ENCODE measurements at regions of chr10 and their contacts with region 1.

Region 1: GRCh38 chr10:97278491-97278989 is 13.9 kb downstream of the ARHGAP19 start:
- DNase-seq: peak; percentile 65
- H3K27ac ChIP-seq: no peak overlapping the region
- CTCF ChIP-seq: peak; percentile 76

Region 2: GRCh38 chr10:97292097-97292862 is 13.7 kb after region 1 on chr10 and contains the start of gene ARHGAP19:
- CTCF ChIA-PET with region 1: interaction called, 12 read pairs
- POLR2A ChIA-PET with region 1: interaction called, 3 read pairs
- DNase-seq: peak; percentile 100
- H3K27ac ChIP-seq: peak within 1 kb of the TSS; percentile 99
- CTCF ChIP-seq: peak; percentile 47; the same call in 1 of the 2 replicates

Region 3: DNA sequence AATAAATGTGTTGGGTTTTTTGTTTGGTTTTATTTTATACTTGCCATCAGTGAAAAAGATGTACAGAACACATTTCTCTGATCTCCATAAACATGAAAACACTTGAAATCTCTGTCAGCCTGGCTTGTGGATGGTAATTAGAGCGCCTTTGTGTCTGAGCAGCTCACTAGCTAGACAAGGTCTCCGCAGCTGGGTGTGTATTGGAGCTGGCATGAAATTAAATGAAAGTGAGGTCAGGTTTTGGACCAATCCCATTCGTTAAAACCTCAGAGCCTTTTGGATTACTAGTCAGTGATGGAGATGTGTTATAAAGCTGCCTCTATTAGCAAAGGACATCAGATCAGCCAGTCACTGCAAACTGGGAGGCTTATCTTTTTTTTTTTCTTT is 43.3 kb after region 1 on chr10:
- CTCF ChIA-PET with region 1: no interaction called
- POLR2A ChIA-PET with region 1: no interaction called
- DNase-seq: no peak
- H3K27ac ChIP-seq: no peak overlapping the region
- CTCF ChIP-seq: no peak

Region 4: GRCh38 chr10:97355571-97355975 is 77.0 kb after region 1 on chr10:
- CTCF ChIA-PET with region 1: interaction called, 11 read pairs
- POLR2A ChIA-PET with region 1: no interaction called
- DNase-seq: no peak
- H3K27ac ChIP-seq: no peak overlapping the region
- CTCF ChIP-seq: peak; percentile 13; the same call in 1 of the 2 replicates

Measured in RWPE1 (cell line).